Pancreas (tissue), 10 donors: ENCODE measurements at regions of chr5 and their contacts with region 1.

Region 1: GRCh38 chr5:135551593-135552447 is 16.1 kb upstream of the NEUROG1 start:
- DNase-seq: peak in 5 of 6 donors; percentile 40 to 76 (median 65)
- ATAC-seq: peak; percentile 60 to 95 (median 90)
- H3K4me3 ChIP-seq: no peak overlapping the region
- H3K27ac ChIP-seq: no peak overlapping the region
- H3K4me1 ChIP-seq: no peaks in the 10 kb centered on the region
- H3K27me3 ChIP-seq: peaks cover 0 to under 1% (median 0%) of the 10 kb centered on the region in 4 donors
- CTCF ChIP-seq: peak; percentile 62 to 82 (median 76)

Region 2: DNA sequence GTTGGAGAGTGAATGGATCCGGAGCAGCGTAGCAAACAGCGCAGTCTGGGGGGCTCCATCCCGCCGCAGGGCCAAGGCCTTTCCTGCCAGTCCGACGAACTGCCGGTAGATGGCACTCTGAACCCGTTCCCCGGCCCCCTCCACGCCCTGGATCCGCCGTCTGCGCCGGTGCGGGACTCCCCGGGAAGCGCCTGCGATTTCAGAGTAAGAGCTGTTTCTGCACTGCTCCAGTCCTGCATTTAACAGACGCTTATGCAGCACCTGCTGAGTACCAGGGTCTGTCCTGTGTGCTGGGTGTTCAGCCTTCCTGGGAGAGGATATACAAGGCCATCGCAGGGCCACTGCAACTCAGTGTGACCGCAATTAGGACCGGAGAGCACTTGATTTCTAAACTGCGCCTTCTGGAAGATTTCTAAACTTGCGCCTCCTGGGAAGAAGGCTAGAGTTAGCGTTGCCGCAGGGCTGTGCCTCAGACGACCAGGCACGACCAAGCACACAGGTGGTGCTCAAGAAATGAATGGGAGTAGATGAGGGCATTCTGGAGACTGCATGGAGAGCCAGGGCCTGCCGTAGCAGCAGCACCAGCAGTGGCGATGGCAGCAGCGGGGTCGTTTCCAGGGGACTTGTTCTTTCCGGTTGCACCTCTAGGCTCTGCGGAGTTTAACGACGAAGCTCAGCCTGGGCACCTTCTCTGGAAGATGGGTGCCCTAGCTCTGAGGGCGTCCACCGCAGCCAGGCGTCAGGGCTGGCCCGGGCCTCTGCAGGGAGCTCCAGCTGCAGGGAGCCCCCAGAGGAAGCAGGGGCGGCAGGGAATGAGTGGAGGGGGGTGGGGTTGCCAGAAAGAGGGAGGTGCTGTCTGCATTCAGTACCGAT is 85.4 kb before region 1 on chr5:
- intact Hi-C with region 1: loop called in 2 of 3 experiments (anchors 2 to 5 kb)
- DNase-seq: peak; percentile 51 to 91 (median 70)
- ATAC-seq: peak; percentile 91 to 98 (median 97)
- H3K4me3 ChIP-seq: peak overlapping the region in 1 of 4 donors; percentile 8
- H3K27ac ChIP-seq: no peak overlapping the region
- H3K4me1 ChIP-seq: peaks cover 0 to 3% (median 0%) of the 10 kb centered on the region in 3 donors
- H3K27me3 ChIP-seq: peaks cover 0 to 4% (median 0%) of the 10 kb centered on the region in 4 donors
- CTCF ChIP-seq: peak; percentile 52 to 85 (median 69)